MCF 10A (cell line): ENCODE measurements at regions of chr12 and their contacts with region 1.

Region 1: DNA sequence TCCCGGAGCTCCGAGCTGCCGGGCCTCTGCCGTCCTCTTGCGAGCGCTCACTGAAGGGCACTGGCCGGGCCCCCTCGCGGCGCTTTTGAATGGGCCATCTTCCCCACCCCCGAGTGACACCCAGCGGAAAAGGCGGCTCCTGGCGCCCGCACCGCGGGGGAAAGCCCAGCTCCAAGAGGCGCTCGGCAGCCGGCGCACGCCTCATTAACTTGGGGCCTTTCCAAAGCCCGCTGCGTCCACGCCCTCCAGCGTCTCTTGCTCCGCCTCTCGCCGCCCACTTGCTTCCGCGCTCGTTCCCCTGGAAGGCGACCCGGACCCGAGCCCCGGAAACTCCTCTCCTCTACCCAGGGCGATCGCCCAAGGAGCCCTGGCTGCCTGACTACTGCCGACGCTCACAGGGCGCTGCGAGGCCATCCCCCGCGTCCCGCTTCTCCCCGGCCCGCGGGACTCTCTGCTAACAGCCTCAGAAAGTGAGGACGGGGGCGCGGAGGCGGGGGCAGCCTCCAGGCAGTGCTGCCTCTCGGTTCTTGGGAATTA is at the start of gene PHLDA1:
- DNase-seq: peak; percentile 98
- H3K4me3 Mint-ChIP-seq: peak within 1 kb of the TSS; percentile 89
- H3K27ac Mint-ChIP-seq: peak within 1 kb of the TSS; percentile 96
- H3K4me1 Mint-ChIP-seq: peaks cover 29% of the 10 kb centered on the region
- H3K27me3 Mint-ChIP-seq: no peaks in the 10 kb centered on the region
- CTCF ChIP-seq: peak; percentile 71
- total RNA-seq, gene PHLDA1: 183 and 203 TPM in 2 replicates

Region 2: DNA sequence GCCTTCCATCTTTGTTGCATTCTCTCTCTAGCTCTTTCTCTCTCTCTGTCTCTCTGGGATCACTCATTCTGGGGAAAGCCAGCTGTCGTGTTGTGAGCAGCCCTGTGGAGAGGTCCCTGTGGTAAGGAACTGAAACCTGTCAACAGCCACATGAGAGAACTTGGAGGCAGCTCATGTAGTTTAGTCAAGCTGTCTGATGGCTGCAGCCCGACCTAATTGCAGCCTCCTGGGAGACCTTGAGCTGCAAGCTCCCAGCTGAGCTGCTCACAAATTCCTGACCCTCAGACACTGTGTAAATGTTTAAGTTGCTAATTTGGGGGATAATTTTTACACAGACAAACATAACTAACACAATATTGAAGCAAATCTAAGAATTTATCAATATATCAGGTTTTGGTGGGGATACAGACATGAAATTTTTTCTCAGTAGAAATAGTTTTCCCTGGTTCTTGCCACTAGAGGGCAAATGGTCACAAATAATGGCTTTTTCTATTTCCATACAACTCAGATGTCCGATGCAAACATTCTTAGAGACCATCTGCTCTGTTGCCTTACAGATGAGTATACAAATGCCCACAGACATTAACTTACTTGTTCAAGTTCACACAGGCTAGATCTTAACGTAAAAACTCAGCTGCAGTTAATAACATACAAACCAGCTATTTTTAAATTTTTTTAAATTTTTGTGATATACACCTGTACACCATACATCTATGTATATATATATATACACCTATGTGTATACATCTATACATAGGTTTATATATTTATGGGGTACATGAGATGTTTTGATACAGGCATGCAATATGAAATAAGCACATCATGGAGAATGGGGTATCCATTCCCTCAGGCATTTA is 504.7 kb before region 1 on chr12:
- CTCF ChIA-PET with region 1: interaction called, 117 read pairs
- POLR2A ChIA-PET with region 1: interaction called, 47 read pairs
- intact Hi-C with region 1: loop called (anchors 1 kb)
- DNase-seq: peak; percentile 59
- H3K4me3 Mint-ChIP-seq: no peak overlapping the region
- H3K27ac Mint-ChIP-seq: no peak overlapping the region
- H3K4me1 Mint-ChIP-seq: no peaks in the 10 kb centered on the region
- H3K27me3 Mint-ChIP-seq: no peaks in the 10 kb centered on the region
- CTCF ChIP-seq: peak; percentile 55

Region 3: DNA sequence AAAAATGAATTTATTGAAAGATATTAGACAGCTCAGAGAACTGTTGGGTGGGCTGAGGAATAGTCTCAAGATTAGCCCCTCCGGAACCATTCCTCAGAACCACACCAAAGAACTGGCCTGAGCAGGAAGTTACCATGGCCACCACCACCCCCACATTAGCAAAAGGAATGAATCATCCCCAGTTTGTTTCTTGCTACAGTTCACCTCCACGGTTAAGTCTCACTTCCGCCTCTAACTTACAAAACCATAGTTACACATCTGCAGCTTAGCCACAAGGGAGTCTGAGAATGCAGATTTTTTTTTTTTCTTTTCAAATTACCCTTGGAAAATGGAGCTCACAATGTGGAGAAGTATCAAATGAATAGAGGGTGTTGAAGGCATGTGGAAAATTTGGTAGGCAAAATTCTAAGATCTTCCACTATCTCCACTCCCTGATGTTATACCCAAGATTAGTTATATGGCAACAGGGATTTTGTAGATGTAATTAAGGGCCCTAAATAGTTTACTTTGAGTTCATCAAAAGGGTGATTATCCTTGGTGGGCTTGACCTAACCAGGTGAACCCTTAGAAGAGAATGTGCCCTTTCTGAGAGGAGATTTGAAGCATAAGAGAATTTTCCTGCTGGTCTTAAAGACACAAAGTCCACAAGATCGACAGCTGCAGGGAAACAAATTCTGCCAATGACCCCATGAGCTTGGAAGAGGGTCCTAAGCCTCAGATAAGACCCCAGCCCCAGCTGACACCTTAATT is 390.4 kb before region 1 on chr12:
- CTCF ChIA-PET with region 1: no interaction called
- POLR2A ChIA-PET with region 1: interaction called, 16 read pairs
- intact Hi-C with region 1: loop called (anchors 5 kb)
- DNase-seq: peak; percentile 75
- H3K4me3 Mint-ChIP-seq: no peak overlapping the region
- H3K27ac Mint-ChIP-seq: peak overlapping the region; percentile 91
- H3K4me1 Mint-ChIP-seq: peaks cover 28% of the 10 kb centered on the region
- H3K27me3 Mint-ChIP-seq: no peaks in the 10 kb centered on the region
- CTCF ChIP-seq: no peak

Region 4: DNA sequence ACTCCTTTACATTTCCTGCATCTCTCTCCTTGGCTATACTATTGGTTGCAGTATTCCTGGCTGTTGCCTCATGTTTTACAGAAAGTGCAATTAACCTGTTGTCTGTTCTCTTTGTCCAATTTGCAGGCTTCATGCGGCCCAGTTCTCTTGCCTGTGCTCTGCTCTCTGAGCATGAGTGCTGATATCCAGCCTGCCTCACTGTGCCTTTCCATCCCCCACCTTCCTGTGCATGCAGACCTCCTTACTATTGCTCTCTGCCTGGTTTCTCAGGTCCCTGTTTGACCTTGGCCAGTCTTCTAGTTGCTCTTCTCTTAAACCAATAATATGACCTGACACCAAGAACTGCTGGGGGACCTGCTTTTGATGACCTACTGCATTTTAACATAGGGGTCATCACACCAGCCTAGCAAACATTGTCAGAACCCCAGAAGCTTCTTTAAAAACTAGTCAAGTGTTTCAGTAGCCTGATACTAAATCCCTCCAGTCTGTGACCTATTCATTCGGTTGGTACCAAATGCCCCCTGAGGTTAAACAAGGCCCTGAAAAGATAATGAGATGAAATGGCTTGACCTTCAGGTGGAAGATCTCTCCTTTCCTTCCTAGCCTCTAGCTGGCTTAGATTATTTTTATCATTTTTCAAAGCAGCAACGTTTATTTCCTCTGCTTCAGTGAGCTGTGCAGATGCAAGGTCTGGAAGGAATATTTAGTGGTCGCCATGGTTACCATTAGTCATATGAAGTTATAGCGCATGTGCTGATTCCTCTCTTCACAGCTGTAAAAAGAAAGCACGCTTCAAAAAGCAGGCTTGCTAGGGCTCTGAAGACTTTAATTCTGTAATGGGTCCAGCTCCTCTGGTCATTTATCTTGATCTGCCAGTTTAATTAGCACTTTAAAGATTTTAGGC is 216.5 kb before region 1 on chr12:
- CTCF ChIA-PET with region 1: interaction called, 21 read pairs
- POLR2A ChIA-PET with region 1: interaction called, 33 read pairs
- intact Hi-C with region 1: loop called (anchors 1 kb)
- DNase-seq: peak; percentile 37
- H3K4me3 Mint-ChIP-seq: no peak overlapping the region
- H3K27ac Mint-ChIP-seq: peak overlapping the region; percentile 37
- H3K4me1 Mint-ChIP-seq: peaks cover 8% of the 10 kb centered on the region
- H3K27me3 Mint-ChIP-seq: no peaks in the 10 kb centered on the region
- CTCF ChIP-seq: no peak

Region 5: GRCh38 chr12:75933101-75933500 is 98.5 kb before region 1 on chr12:
- CTCF ChIA-PET with region 1: interaction called, 6 read pairs
- POLR2A ChIA-PET with region 1: interaction called, 5 read pairs
- intact Hi-C with region 1: loop called (anchors 5 kb)
- DNase-seq: peak; percentile 78
- H3K4me3 Mint-ChIP-seq: no peak overlapping the region
- H3K27ac Mint-ChIP-seq: no peak overlapping the region
- H3K4me1 Mint-ChIP-seq: peaks cover 16% of the 10 kb centered on the region
- H3K27me3 Mint-ChIP-seq: no peaks in the 10 kb centered on the region
- CTCF ChIP-seq: no peak

Region 6: DNA sequence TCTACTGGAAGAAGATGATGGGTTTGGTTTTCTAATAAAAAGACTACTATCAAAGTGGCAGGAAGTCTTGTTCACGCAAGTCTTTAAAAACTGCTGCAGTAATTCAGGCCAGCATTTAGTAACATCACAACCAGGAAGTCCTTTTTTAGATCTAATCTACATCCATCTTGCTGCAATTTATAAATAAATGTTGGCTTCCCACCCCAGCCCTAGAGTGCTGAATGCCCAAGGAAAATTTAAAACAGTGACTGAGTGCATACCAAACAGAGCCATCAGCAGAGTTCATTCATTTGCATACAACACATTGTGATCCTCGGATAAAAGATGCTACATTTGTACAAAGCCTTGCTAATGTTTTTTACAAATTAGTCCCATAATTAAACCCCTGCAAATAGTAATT is 72.1 kb before region 1 on chr12:
- CTCF ChIA-PET with region 1: no interaction called
- POLR2A ChIA-PET with region 1: no interaction called
- intact Hi-C with region 1: no loop called
- DNase-seq: no peak
- H3K4me3 Mint-ChIP-seq: no peak overlapping the region
- H3K27ac Mint-ChIP-seq: no peak overlapping the region
- H3K4me1 Mint-ChIP-seq: no peaks in the 10 kb centered on the region
- H3K27me3 Mint-ChIP-seq: no peaks in the 10 kb centered on the region
- CTCF ChIP-seq: no peak

Region 7: DNA sequence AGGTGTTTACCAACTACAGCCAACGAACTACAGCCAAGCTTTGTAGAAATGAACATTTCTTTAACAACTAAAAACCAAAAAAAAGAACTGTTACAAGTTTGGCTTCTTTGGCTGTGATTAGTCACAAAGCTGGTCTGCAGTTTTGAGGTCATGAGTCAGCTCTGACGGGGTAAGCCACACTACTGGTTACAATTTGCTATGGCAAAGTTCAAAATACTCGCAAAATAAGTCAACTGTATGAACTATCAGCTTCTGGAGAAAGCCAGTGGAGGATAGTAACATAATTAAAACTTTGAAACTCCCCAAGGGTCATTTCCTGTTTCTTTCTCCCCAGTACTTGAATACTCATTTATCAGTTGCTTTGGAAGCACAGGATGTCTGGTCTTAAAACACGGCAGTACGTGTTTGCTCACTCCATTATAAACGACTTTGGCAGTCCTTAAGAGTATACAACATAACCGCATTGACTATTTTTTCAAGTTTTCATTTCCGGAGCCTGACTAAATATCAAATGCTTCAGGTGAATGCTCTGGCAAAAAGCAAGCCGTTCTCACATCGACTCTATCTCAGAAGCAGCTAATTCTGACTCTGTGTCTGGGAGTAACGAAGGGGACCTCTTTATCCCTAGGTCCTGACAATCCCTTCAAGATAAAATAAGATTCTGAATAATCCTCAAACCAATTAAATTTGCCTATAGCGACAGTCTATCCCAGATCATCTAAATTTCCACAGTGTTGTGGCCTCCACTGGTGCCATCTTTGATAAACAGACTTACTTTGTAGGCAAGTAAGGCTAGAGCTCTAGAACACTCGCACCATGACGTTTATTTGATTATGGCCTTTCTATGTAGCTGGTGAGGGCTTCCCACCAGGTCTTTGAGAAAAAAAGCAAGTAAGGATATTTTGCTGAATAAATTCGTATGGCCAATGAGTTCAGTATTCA is 10.6 kb before region 1 on chr12:
- CTCF ChIA-PET with region 1: interaction called, 6 read pairs
- POLR2A ChIA-PET with region 1: interaction called, 76 read pairs
- intact Hi-C with region 1: no loop called
- DNase-seq: peak; percentile 90
- H3K4me3 Mint-ChIP-seq: peak overlapping the region; percentile 14
- H3K27ac Mint-ChIP-seq: peak overlapping the region; percentile 96
- H3K4me1 Mint-ChIP-seq: peaks cover 35% of the 10 kb centered on the region
- H3K27me3 Mint-ChIP-seq: no peaks in the 10 kb centered on the region
- CTCF ChIP-seq: no peak

Region 8: GRCh38 chr12:76075448-76075847 is 43.8 kb after region 1 on chr12:
- CTCF ChIA-PET with region 1: no interaction called
- POLR2A ChIA-PET with region 1: no interaction called
- intact Hi-C with region 1: no loop called
- DNase-seq: no peak
- H3K4me3 Mint-ChIP-seq: no peak overlapping the region
- H3K27ac Mint-ChIP-seq: no peak overlapping the region
- H3K4me1 Mint-ChIP-seq: peaks cover 30% of the 10 kb centered on the region
- H3K27me3 Mint-ChIP-seq: no peaks in the 10 kb centered on the region
- CTCF ChIP-seq: no peak

Region 9: GRCh38 chr12:76094754-76095153 is 63.1 kb after region 1 on chr12:
- CTCF ChIA-PET with region 1: no interaction called
- POLR2A ChIA-PET with region 1: no interaction called
- intact Hi-C with region 1: no loop called
- DNase-seq: no peak
- H3K4me3 Mint-ChIP-seq: no peak overlapping the region
- H3K27ac Mint-ChIP-seq: no peak overlapping the region
- H3K4me1 Mint-ChIP-seq: no peaks in the 10 kb centered on the region
- H3K27me3 Mint-ChIP-seq: no peaks in the 10 kb centered on the region
- CTCF ChIP-seq: no peak